ENCODE measurements at regions of chr12 and their contacts with region 1.

Region 1: DNA sequence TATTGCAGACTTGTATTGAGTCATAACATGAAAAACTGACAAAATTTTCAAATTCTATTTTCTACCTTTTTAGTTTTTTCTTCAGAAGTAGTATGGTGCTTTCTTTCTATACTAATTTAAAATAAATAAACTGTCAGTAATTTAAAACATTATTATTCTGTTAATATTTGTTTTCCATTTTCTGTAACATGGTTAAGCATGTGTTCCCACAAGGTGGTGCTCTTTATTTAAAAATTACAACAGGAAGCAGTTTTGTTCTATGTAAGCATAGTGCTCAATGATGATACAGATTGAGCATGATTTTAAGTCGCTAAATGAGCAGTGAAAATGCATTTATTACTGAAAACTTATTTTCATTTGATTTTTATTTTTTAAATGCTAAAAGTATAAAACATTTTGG is 114.6 kb downstream of the PPFIA2 start:
- DNase-seq: no peak
- H3K4me3 ChIP-seq: peak overlapping the region in 1 of 59 donors; percentile 2
- H3K27ac ChIP-seq: no peak overlapping the region
- H3K27me3 ChIP-seq: no peaks in the 10 kb centered on the region
- CTCF ChIP-seq: peak; percentile 44 to 93 (median 75)

Region 2: DNA sequence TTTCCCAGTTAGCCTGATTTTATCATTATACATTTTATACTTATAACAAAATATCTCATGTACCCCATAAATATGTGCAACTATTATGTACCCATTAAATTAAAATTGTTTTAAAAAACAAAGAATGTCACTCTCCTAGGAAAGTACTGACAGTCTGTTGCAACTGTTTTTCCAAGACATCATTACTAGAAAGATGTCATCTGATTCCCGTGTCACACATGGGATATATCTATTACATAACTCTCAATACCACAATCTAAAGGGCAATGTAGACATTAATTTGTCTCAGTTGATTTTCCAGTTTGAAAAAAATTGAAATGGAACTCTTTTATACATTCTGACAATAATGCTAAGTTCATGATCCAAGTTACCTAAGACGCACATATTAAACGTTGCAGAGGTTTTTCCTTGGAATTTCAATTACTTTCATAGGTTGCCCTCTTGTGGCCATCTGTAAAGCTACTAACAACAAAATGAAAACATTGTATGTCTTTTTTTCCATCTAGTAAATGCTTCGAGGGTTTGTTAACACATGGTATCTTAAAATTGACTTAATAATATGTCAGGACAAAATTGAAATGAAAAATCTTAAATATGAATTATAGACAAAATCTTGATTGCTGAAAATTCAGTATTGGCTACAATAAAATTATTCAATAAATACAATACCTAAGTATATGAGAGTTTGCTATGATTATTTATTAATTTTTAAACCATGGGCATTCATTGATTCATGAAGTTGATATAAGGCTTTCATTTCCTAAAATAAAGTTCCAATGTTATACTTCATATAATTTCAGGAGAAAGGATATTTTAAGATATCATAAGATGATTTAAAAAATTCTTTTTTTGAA is 16.9 kb before region 1 on chr12:
- intact Hi-C with region 1: no loop called
- DNase-seq: peak in 1 of 10 donors; percentile 13
- H3K4me3 ChIP-seq: peak overlapping the region in 53 of 59 donors; percentile 1 to 59 (median 40)
- H3K27ac ChIP-seq: no peak overlapping the region
- H3K27me3 ChIP-seq: no peaks in the 10 kb centered on the region
- CTCF ChIP-seq: peak; percentile 59 to 94 (median 82)

Region 3: DNA sequence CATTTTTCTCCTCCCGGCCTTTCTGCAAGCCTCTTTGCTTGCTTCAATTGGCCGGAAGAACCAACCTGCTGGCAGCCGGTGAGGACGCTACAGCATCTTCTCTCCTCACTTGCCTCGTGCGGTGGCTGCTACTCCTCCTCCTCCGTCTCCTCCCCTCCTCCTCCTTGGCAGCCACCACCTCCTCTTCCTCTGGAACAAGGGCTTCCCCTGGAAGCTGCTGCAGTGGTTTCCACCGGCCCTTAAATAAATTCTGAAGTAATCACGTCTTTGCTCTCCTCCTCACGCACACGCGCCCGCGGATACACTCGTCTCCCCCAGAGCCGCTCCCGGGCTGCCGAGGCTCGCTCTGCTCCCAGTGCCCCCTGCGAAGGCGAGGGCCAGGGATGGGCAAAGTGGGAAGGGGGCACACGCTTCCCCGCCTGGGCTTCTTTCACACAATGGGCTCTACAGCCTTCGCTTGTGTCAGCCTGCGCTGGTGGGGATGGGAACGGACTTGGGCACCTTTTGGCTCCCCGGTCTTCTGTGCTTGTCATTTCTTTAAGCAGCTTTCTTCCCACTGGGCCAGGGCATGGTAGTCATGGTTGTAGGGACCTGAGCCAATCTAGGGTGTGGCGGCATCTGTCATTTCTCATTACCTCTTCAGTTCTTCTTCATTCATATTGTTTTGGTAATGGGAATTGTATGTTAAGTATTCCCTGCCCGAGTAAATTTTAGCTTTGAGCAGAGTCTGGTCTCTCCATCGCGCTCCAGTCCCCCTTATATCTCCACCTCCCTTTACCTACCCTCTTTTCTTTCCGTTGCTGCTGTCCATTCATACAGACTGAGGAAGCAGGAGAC is 114.9 kb after region 1 on chr12 and contains the start of gene PPFIA2:
- intact Hi-C with region 1: loop called in 1 of 2 experiments (anchors 10 kb)
- DNase-seq: peak; percentile 37 to 79 (median 68)
- H3K4me3 ChIP-seq: peak within 1 kb of the TSS; percentile 56 to 94 (median 78)
- H3K27ac ChIP-seq: peak within 1 kb of the TSS in 57 of 59 donors; percentile 4 to 92 (median 78)
- H3K27me3 ChIP-seq: no peaks in the 10 kb centered on the region
- CTCF ChIP-seq: no peak
- total RNA-seq, gene PPFIA2: 99.2 to 234 (median 172) TPM

Region 4: GRCh38 chr12:81874586-81874985 is 230.1 kb after region 1 on chr12:
- intact Hi-C with region 1: no loop called
- DNase-seq: no peak
- H3K4me3 ChIP-seq: no peak overlapping the region
- H3K27ac ChIP-seq: no peak overlapping the region
- H3K27me3 ChIP-seq: no peaks in the 10 kb centered on the region
- CTCF ChIP-seq: no peak

Region 5: GRCh38 chr12:82019533-82019932 is 375.0 kb after region 1 on chr12:
- intact Hi-C with region 1: no loop called
- DNase-seq: no peak
- H3K4me3 ChIP-seq: no peak overlapping the region
- H3K27ac ChIP-seq: no peak overlapping the region
- H3K27me3 ChIP-seq: no peaks in the 10 kb centered on the region
- CTCF ChIP-seq: peak in 7 of 56 donors; percentile 10 to 28 (median 16)

Region 6: DNA sequence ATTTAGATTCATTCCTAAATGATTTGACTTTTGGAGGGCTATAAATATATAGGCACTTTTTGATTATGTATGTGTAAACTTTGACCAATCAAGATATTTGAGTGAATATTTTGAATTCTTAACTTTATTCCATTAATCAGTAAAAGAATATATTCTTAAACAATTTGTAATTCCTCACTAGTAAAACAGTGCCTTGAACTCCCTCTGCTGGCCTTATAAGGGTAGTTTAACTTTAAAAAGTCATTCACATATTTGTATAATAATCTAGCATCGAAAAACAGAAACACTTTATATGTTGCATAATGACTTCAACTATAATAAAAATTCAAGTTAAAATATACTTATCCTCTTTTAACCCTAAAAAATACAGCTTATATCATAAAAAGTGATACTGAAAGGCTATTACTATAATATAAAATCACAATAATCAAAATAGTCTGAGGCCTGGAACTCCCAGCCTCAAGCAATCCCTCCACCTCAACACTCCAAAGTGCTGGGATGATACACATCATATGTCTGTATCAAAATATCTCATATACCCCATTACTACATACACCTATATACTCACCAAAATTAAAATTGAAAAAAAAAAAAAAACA is 682.5 kb after region 1 on chr12:
- intact Hi-C with region 1: loop called (anchors 5 to 10 kb)
- DNase-seq: no peak
- H3K4me3 ChIP-seq: no peak overlapping the region
- H3K27ac ChIP-seq: no peak overlapping the region
- H3K27me3 ChIP-seq: no peaks in the 10 kb centered on the region
- CTCF ChIP-seq: peak; percentile 45 to 86 (median 68)